ENCODE measurements at regions of chr13 and their contacts with region 1.

Region 1: GRCh38 chr13:23579072-23579895 is 9.1 kb downstream of the TNFRSF19 start:
- DNase-seq: peak; percentile 94
- H3K4me3 Mint-ChIP-seq: peak overlapping the region; percentile 75
- H3K27ac Mint-ChIP-seq: no peak overlapping the region
- H3K4me1 Mint-ChIP-seq: peaks cover 14% of the 10 kb centered on the region
- H3K27me3 Mint-ChIP-seq: peaks cover 33% of the 10 kb centered on the region

Region 2: GRCh38 chr13:21603531-21604448 is 1975.5 kb before region 1 on chr13 and contains the start of gene MICU2:
- CTCF ChIA-PET with region 1: no interaction called
- POLR2A ChIA-PET with region 1: no interaction called
- intact Hi-C with region 1: loop called (anchors 10 kb)
- DNase-seq: peak; percentile 97
- H3K4me3 Mint-ChIP-seq: peak within 1 kb of the TSS; percentile 81
- H3K27ac Mint-ChIP-seq: peak within 1 kb of the TSS; percentile 89
- H3K4me1 Mint-ChIP-seq: peaks cover 26% of the 10 kb centered on the region
- H3K27me3 Mint-ChIP-seq: peaks cover 5% of the 10 kb centered on the region
- total RNA-seq, gene MICU2: 32.6 to 33.3 TPM

Region 3: DNA sequence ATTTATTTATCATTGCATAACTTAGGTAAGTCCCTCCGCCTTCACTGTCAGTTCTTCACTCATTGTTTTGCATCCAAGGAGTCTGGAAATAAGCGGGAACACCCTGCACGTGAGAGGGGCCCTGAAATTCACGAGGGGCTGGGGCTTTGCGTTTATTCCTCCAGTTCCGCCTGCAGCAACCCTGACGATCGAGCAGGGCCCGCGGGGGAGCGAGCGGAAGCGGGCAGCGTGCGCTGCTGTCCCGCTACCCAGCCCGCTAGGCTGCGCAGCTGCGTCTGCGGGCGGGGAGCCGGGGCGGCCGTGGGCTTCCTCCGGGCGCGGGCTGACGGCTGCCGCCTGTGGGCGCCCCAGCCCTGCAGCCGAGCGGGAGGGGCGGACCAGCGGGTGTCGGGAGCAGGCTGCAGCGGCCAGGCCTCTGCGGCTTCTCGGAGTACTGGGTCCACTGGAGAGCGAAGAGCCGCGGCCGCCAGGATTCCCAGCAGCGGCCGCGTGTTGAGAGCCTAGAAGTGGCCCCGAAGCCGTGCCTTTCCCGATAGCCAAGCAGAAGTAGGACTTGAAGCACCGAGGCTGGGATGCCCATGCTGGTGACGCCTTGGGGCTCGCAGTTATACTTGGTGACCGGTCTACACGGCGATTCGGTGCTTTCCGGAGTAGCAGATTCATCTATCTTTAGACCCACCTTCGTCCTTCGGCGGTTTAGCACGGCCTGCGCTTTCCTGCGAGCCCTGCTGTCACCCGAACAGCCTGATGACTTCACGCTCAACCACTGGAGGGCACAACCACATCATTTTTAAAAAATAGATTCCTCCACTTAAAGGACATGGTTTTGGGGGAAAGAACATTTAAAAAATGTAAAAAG is 112.9 kb before region 1 on chr13:
- CTCF ChIA-PET with region 1: no interaction called
- POLR2A ChIA-PET with region 1: no interaction called
- intact Hi-C with region 1: loop called (anchors 2 kb)
- DNase-seq: peak; percentile 72
- H3K4me3 Mint-ChIP-seq: peak overlapping the region; percentile 58
- H3K27ac Mint-ChIP-seq: no peak overlapping the region
- H3K4me1 Mint-ChIP-seq: peaks cover 5% of the 10 kb centered on the region
- H3K27me3 Mint-ChIP-seq: peaks cover 6% of the 10 kb centered on the region

Region 4: GRCh38 chr13:23621316-23621645 is 42.0 kb after region 1 on chr13:
- CTCF ChIA-PET with region 1: no interaction called
- POLR2A ChIA-PET with region 1: no interaction called
- intact Hi-C with region 1: loop called (anchors 1 kb)
- DNase-seq: peak; percentile 45
- H3K4me3 Mint-ChIP-seq: no peak overlapping the region
- H3K27ac Mint-ChIP-seq: no peak overlapping the region
- H3K4me1 Mint-ChIP-seq: peaks cover 4% of the 10 kb centered on the region
- H3K27me3 Mint-ChIP-seq: peaks cover 5% of the 10 kb centered on the region

Region 5: DNA sequence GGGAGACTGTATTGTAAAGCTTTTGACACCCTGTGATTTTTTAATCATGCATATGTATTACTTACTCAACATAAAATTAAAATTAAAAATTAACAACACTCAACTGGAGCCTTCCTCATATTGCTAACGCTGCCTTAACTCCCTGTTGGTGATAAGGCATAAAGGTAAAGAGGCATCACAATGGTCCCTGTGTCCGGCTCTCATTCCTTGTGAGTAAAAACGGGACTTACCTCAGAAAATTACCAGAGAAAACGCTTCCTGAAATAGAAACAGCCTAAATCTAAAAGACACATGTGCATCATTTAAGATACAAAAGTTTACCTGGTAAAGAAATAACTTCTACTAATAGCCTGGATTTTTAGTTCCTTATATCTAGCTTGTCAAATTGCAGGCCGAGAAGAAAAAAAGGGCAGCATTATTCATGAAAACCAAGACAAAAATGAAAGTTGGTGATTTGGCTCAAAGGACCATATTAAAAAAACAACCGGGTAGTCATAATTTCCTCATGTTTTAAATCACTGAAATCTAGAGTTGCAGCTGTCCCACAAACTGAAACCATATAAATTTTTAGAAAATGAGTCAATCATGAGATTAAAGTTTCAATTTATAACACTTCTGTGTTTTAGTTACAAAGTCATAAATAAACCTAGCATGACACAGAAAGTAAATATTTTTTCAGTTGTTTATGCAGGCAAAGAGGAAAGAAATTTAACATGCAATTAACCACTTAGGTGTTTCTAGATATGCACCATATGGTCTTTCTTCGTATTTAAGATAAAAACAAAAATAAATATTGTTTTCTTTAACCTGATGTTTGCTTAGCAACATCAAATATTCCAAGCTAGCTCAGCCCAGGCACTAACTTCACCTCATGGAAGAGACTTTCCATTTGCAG is 215.2 kb after region 1 on chr13:
- CTCF ChIA-PET with region 1: no interaction called
- POLR2A ChIA-PET with region 1: no interaction called
- intact Hi-C with region 1: loop called (anchors 2 kb)
- DNase-seq: no peak
- H3K4me3 Mint-ChIP-seq: no peak overlapping the region
- H3K27ac Mint-ChIP-seq: no peak overlapping the region
- H3K4me1 Mint-ChIP-seq: peaks cover 29% of the 10 kb centered on the region
- H3K27me3 Mint-ChIP-seq: no peaks in the 10 kb centered on the region

Region 6: DNA sequence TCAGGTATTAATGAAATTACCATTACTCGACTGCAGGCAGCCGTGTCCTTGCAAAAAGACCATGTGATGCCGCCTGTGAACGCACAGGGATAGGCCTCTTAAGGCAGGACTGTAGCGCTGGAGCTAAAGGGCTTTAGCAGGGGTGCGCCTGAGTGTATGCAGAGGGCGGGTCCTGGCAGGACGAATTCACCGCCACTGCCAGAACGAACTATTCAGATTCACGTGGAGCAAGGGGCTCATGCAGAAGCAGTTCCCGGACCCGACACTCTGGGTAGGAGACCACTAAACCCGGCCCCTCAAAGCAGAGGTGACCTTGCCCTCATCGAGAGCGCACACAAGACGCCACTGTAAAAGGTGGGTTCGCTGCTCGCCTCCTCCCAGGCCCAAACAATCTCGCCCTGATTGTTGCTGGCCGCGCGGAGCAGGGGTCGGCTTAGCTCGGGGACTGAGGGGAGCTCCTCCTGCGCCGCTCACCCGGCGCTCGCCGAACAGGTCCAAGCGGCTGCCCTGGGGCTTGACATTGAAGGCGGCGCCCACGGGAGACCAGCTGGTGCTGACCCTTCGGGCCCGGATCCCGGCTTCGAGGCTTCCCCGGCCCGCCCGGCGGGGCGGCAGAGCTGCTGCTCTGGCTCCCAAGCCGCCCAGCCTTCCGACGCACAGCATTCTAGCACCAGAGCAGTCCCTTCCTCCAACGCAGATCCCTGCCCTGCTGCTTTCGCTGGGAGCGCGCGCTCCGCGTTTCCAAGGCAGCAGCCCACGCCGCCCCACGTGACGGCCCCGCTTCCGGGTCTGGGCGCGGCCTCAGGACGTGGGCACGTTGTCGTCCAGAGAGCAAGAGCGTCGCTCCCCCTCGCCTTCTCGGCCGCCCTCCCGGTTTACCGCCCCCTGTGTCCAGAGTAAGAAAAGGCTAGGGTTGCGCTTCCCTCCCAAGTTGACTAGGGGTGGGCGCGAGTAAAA is 309.7 kb after region 1 on chr13 and contains the start of gene MIPEP:
- CTCF ChIA-PET with region 1: interaction called, 6 read pairs
- POLR2A ChIA-PET with region 1: interaction called, 3 read pairs
- intact Hi-C with region 1: loop called (anchors 1 kb)
- DNase-seq: peak; percentile 95
- H3K4me3 Mint-ChIP-seq: peak within 1 kb of the TSS; percentile 82
- H3K27ac Mint-ChIP-seq: peak within 1 kb of the TSS; percentile 62
- H3K4me1 Mint-ChIP-seq: peaks cover 21% of the 10 kb centered on the region
- H3K27me3 Mint-ChIP-seq: no peaks in the 10 kb centered on the region
- total RNA-seq, gene MIPEP: 16.6 to 16.7 TPM